ENCODE measurements at regions of chr3 and their contacts with region 1.

Region 1: GRCh38 chr3:120526011-120526870 is 69.9 kb upstream of the NDUFB4 start:
- DNase-seq: no peak
- H3K4me3 ChIP-seq: no peak overlapping the region
- H3K27ac ChIP-seq: no peak overlapping the region
- H3K4me1 ChIP-seq: peaks cover 13% of the 10 kb centered on the region; the same call in 1 of the 2 replicates
- H3K27me3 ChIP-seq: no peaks in the 10 kb centered on the region
- CTCF ChIP-seq: no peak

Region 2: DNA sequence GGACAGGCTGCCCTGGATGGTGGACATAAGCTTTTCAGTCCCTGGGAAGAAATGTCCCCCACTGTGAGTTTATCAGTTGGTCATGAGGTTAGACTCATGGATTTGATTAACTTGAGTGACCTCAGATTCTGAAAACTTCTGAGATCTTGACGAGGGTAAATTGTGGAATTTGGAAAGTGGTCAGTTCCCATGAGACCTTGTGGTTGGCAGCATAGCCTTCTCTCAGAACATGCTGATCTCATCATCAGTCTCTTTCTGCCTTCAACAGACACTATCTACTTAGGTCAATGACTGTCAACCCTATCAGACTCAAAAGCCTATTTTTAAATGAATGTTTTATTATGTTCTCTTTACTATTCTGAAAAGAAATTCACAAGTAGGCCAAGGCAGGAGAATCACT is 24.3 kb after region 1 on chr3:
- CTCF ChIA-PET with region 1: no interaction called
- POLR2A ChIA-PET with region 1: no interaction called
- intact Hi-C with region 1: loop called (anchors 2 kb)
- DNase-seq: no peak
- H3K4me3 ChIP-seq: no peak overlapping the region
- H3K27ac ChIP-seq: no peak overlapping the region
- H3K4me1 ChIP-seq: no peaks in the 10 kb centered on the region
- H3K27me3 ChIP-seq: no peaks in the 10 kb centered on the region
- CTCF ChIP-seq: no peak

Region 3: DNA sequence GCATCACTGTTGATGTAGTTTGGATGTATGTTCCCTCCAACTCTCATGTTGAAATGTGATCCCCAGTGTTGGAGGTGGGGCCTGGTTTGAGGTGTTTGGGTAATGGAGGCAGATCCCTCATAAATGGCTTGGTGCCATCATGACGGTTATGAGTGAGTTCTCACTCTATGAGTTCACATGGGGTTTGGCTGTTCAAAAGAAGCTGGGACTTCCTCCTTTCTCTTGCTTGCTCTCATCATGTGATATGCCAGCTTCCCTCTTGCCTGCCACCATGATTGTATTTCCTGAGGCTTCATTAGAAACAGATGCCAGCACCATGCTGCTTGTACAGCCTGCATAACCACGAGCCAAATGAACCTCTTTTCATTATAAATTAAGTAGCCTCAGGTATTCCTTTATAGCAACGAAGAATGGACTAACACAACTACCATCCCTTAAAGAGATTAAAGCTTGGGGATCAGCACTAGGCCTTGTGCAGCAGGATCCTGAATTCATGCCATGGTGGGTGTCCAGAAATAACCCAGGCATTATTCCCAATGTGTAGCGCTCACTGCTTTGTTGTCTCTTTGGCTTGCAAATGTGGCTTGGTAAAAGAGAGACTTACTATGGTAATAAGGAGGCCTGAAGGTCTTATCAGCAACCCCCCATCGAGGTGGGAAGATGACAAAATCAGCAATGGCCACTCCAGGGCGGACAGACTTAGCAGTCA is 111.8 kb after region 1 on chr3:
- CTCF ChIA-PET with region 1: no interaction called
- POLR2A ChIA-PET with region 1: no interaction called
- intact Hi-C with region 1: no loop called
- DNase-seq: no peak
- H3K4me3 ChIP-seq: no peak overlapping the region
- H3K27ac ChIP-seq: no peak overlapping the region
- H3K4me1 ChIP-seq: no peaks in the 10 kb centered on the region
- H3K27me3 ChIP-seq: no peaks in the 10 kb centered on the region
- CTCF ChIP-seq: no peak